HAP-1 (cell line): ENCODE measurements at regions of chr7 and their contacts with region 1.

Region 1: DNA sequence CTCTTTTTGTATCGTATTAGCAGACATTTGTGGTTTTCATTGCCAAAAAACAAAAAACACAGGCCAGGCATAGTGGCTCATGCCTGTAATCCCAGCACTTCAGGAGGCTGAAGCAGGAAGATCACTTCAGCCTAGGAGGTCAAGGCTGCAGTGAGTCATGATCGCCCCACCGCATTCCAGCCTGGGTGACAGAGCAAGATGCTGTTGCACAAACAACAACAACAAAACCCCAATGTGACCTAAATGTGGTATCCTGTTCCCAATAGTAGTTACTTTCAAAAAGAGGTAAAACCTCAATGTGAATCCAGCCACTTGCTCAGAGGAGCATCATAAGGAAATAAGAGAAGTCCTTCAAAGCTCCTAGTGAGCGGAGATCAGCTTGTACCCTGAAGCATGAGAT is 45.8 kb upstream of the SKAP2 start:
- DNase-seq: no peak
- H3K4me3 ChIP-seq: no peak overlapping the region
- H3K4me1 ChIP-seq: peaks cover 23% of the 10 kb centered on the region
- H3K27me3 ChIP-seq: no peaks in the 10 kb centered on the region

Region 2: DNA sequence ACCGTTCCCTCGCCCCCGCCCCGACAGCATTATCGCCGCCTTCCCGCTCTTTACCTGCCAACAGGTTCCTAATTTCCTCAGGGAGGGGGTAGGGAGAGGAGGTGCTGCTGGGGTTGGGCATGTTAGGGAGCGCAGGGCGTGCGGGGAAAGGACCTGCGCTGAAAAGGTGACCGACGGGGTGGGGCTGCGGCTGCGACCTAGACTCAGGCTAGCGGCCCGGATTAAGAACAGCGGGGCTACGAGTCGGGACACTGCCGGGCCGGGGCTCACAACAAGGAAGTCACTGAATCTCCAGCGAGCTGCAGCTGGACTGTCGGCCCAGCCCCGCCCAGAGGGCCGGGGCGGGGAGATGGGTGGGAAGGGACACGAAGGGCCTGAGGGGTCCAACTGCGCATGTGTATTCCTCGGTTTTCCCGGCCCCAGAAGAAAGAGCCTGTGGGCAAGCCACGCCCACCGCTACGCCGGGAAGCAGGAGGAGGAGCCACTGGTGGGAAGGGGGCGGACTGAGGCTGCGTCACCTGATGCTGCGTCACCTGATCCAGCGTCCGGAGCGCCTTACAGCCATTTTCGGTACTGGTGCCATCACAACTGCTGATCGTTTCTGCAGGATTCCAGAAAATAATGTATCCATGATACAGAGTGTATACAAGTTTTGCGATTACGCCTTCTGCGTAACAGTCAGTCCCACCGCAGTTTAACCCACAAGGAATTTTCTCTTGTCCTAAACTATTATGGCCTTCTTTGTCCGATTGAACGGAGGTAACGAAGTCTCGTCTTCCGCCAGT is 45.7 kb before region 1 on chr7 and contains the start of gene SKAP2:
- in situ Hi-C with region 1: loop called (anchors 10 kb)
- DNase-seq: peak; percentile 98 to 99
- H3K4me3 ChIP-seq: peak within 1 kb of the TSS; percentile 86
- H3K4me1 ChIP-seq: peaks cover 38% of the 10 kb centered on the region
- H3K27me3 ChIP-seq: no peaks in the 10 kb centered on the region